ENCODE measurements at regions of chrX and their contacts with region 1.

Region 1: GRCh38 chrX:56733459-56734046 is 4.5 kb downstream of the NBDY start:
- DNase-seq: peak in 1 of 2 donors; percentile 58
- H3K4me3 ChIP-seq: no peak overlapping the region
- H3K27ac ChIP-seq: no peak overlapping the region
- H3K4me1 ChIP-seq: peaks cover 0 to 15% (median 0%) of the 10 kb centered on the region in 4 donors
- H3K27me3 ChIP-seq: no peaks in the 10 kb centered on the region
- CTCF ChIP-seq: peak; percentile 26 to 51

Region 2: GRCh38 chrX:56219700-56220099 is 513.9 kb before region 1 on chrX:
- intact Hi-C with region 1: loop called (anchors 5 kb)
- DNase-seq: no peak
- H3K4me3 ChIP-seq: no peak overlapping the region
- H3K27ac ChIP-seq: peak overlapping the region; percentile 64 to 70
- H3K4me1 ChIP-seq: peaks cover 0 to 30% (median 0%) of the 10 kb centered on the region in 4 donors
- H3K27me3 ChIP-seq: no peaks in the 10 kb centered on the region
- CTCF ChIP-seq: peak; percentile 32 to 48